ENCODE measurements at regions of chr1 and their contacts with region 1.

Region 1: GRCh38 chr1:9004700-9005394 is 21.4 kb downstream of the SLC2A7 start:
- DNase-seq: peak; percentile 94
- ATAC-seq: peak; percentile 97
- H3K4me3 Mint-ChIP-seq: peak overlapping the region; percentile 62
- H3K27ac Mint-ChIP-seq: peak overlapping the region; percentile 42
- H3K4me1 Mint-ChIP-seq: peaks cover 11% of the 10 kb centered on the region
- H3K27me3 Mint-ChIP-seq: no peaks in the 10 kb centered on the region
- CTCF ChIP-seq: peak; percentile 97

Region 2: GRCh38 chr1:8848663-8849386 is 156.0 kb before region 1 on chr1:
- CTCF ChIA-PET with region 1: interaction called, 42 read pairs
- POLR2A ChIA-PET with region 1: no interaction called
- intact Hi-C with region 1: no loop called
- DNase-seq: peak; percentile 87
- ATAC-seq: peak; percentile 96
- H3K4me3 Mint-ChIP-seq: no peak overlapping the region
- H3K27ac Mint-ChIP-seq: no peak overlapping the region
- H3K4me1 Mint-ChIP-seq: no peaks in the 10 kb centered on the region
- H3K27me3 Mint-ChIP-seq: no peaks in the 10 kb centered on the region
- CTCF ChIP-seq: peak; percentile 96

Region 3: DNA sequence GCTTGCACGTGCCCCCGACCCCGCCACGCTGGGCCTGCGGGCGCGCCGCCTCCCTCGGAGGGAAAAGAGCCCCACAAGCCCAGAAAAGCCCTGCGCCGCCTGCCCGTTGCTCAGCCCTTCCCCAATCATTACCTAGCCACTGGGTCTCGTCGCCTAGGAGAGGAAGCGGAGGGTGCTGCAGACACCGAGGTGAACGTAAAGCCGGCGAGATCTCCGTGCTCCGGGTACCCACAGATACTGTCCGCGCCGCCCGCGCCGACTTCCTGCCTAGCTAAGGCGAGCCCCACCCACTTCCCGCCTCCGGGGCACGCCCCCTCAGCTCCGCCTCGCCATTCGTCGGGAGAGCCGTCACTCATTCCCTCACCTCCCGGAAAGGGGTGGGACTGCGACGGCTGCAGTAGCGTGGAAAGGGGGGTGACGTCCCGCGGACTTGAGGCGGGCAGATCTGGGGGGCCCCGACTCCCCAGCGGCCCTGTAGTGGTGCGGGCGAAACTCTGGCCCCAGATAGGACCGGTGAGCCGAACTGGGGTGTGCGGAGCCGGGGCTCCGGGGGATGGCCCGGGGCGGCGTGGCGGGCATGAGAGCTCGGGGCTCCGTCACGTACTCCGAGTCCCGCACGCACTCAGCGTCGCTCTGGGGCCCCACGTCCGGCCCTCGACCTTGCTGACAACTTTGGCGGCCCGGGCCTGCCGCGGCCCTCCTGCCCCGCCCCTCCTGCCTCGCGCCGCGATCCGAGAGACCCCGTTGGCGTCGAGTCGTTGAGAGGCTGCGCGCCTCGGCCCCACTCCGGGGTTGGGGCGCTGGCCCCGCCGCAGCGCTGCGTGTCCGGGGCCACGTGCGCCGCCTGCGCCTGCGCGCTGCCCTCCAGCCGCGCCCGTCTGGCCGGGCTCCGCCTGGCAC is 126.1 kb before region 1 on chr1 and contains the start of gene ENO1:
- CTCF ChIA-PET with region 1: interaction called, 21 read pairs
- POLR2A ChIA-PET with region 1: interaction called, 3 read pairs
- intact Hi-C with region 1: no loop called
- DNase-seq: peak; percentile 99
- ATAC-seq: peak; percentile 73
- H3K4me3 Mint-ChIP-seq: peak within 1 kb of the TSS; percentile 90
- H3K27ac Mint-ChIP-seq: peak within 1 kb of the TSS; percentile 100
- H3K4me1 Mint-ChIP-seq: peaks cover 24% of the 10 kb centered on the region
- H3K27me3 Mint-ChIP-seq: no peaks in the 10 kb centered on the region
- CTCF ChIP-seq: no peak
- total RNA-seq, gene ENO1: 4,199 to 4,245 TPM

Region 4: GRCh38 chr1:8910914-8911313 is 93.9 kb before region 1 on chr1:
- CTCF ChIA-PET with region 1: interaction called, 42 read pairs
- POLR2A ChIA-PET with region 1: interaction called, 3 read pairs
- intact Hi-C with region 1: loop called (anchors 5 kb)
- DNase-seq: no peak
- ATAC-seq: peak; percentile 57
- H3K4me3 Mint-ChIP-seq: no peak overlapping the region
- H3K27ac Mint-ChIP-seq: peak overlapping the region; percentile 66
- H3K4me1 Mint-ChIP-seq: peaks cover 39% of the 10 kb centered on the region
- H3K27me3 Mint-ChIP-seq: no peaks in the 10 kb centered on the region
- CTCF ChIP-seq: no peak

Region 5: DNA sequence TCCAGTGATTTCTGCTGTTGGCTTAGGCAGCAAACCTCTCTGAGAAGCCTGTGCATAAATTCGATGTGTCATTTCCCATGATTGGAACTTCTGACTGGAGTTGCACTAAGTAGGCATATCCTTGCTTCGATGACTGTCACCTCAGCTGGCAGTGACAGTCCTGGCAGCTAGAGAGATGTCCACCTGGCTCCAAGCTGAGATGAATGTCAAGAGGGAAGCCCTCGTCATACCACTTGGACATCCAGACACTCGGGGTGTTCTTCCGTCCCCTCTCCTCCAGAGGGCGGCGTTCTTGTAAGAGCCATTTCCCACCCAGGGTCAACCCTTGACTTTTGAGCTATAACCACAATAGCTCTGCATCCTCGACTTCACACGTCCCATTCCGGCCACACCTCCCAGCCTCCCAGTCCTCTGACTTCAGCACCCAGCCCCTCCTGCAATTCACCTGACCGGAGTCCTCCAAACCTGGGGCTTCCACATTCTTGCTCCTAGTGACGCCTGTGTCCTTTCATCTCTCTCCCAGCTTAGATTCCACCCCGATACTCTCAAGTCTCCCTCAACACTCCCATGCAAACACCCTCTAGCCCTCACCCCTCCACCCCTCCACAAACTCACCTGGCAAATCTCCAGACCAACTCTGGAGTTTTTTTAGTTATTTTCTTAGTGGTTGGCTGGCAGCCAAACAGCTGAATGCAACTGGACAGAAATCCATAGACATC is 41.9 kb before region 1 on chr1:
- CTCF ChIA-PET with region 1: interaction called, 29 read pairs
- POLR2A ChIA-PET with region 1: no interaction called
- intact Hi-C with region 1: no loop called
- DNase-seq: peak; percentile 84
- ATAC-seq: peak; percentile 50
- H3K4me3 Mint-ChIP-seq: peak overlapping the region; percentile 93
- H3K27ac Mint-ChIP-seq: peak overlapping the region; percentile 92
- H3K4me1 Mint-ChIP-seq: peaks cover 79% of the 10 kb centered on the region
- H3K27me3 Mint-ChIP-seq: no peaks in the 10 kb centered on the region
- CTCF ChIP-seq: peak; percentile 70

Region 6: GRCh38 chr1:9101510-9102146 is 96.8 kb after region 1 on chr1:
- CTCF ChIA-PET with region 1: interaction called, 7 read pairs
- POLR2A ChIA-PET with region 1: no interaction called
- intact Hi-C with region 1: loop called (anchors 10 kb)
- DNase-seq: peak; percentile 54
- ATAC-seq: peak; percentile 74
- H3K4me3 Mint-ChIP-seq: no peak overlapping the region
- H3K27ac Mint-ChIP-seq: no peak overlapping the region
- H3K4me1 Mint-ChIP-seq: no peaks in the 10 kb centered on the region
- H3K27me3 Mint-ChIP-seq: no peaks in the 10 kb centered on the region
- CTCF ChIP-seq: peak; percentile 61

Region 7: DNA sequence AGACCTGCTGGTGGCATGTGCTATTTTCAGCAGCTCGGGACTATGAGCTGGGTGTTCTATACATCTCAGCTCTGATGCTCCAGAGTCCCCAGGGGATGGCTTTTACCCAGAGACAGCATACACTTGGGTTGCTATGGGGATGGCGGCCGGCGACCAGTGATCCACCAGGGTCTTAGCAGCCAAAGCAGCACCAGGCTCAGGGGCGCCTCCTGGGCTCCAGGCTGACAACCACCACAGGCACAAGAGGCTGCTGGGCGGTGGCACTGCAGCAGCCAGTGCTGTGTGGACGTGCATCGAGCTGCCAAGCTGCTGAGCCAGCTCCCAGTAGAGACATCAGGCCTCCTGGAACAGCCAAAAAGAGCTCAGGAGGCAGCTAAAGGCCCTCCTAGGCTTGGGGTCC is 856.5 kb after region 1 on chr1:
- CTCF ChIA-PET with region 1: no interaction called
- POLR2A ChIA-PET with region 1: no interaction called
- intact Hi-C with region 1: no loop called
- DNase-seq: no peak
- ATAC-seq: no peak
- H3K4me3 Mint-ChIP-seq: no peak overlapping the region
- H3K27ac Mint-ChIP-seq: no peak overlapping the region
- H3K4me1 Mint-ChIP-seq: peaks cover 8% of the 10 kb centered on the region
- H3K27me3 Mint-ChIP-seq: no peaks in the 10 kb centered on the region
- CTCF ChIP-seq: no peak